Left lung (tissue), 14 donors: ENCODE measurements at regions of chr19 and their contacts with region 1.

Region 1: GRCh38 chr19:13723206-13723605 is 41.1 kb upstream of the MRI1 start:
- DNase-seq: no peak
- ATAC-seq: no peak
- H3K4me3 ChIP-seq: no peak overlapping the region
- H3K27ac ChIP-seq: no peak overlapping the region
- H3K4me1 ChIP-seq: no peaks in the 10 kb centered on the region
- H3K27me3 ChIP-seq: peaks cover 0 to 6% of the 10 kb centered on the region in 2 donors
- CTCF ChIP-seq: no peak

Region 2: GRCh38 chr19:13597640-13598039 is 125.6 kb before region 1 on chr19:
- intact Hi-C with region 1: loop called in 1 of 2 experiments (anchors 5 kb)
- DNase-seq: peak in 2 of 4 donors; percentile 26 to 70
- ATAC-seq: peak; percentile 92
- H3K4me3 ChIP-seq: no peak overlapping the region
- H3K27ac ChIP-seq: no peak overlapping the region
- H3K4me1 ChIP-seq: no peaks in the 10 kb centered on the region
- H3K27me3 ChIP-seq: peaks cover 0 to 16% of the 10 kb centered on the region in 2 donors
- CTCF ChIP-seq: peak; percentile 45 to 59

Region 3: GRCh38 chr19:13652810-13653590 is 70.2 kb before region 1 on chr19:
- intact Hi-C with region 1: no loop called
- DNase-seq: no peak
- ATAC-seq: no peak
- H3K4me3 ChIP-seq: no peak overlapping the region
- H3K27ac ChIP-seq: no peak overlapping the region
- H3K4me1 ChIP-seq: no peaks in the 10 kb centered on the region
- H3K27me3 ChIP-seq: no peaks in the 10 kb centered on the region
- CTCF ChIP-seq: no peak